Caco-2 (cell line): ENCODE measurements at regions of chr9 and their contacts with region 1.

Region 1: DNA sequence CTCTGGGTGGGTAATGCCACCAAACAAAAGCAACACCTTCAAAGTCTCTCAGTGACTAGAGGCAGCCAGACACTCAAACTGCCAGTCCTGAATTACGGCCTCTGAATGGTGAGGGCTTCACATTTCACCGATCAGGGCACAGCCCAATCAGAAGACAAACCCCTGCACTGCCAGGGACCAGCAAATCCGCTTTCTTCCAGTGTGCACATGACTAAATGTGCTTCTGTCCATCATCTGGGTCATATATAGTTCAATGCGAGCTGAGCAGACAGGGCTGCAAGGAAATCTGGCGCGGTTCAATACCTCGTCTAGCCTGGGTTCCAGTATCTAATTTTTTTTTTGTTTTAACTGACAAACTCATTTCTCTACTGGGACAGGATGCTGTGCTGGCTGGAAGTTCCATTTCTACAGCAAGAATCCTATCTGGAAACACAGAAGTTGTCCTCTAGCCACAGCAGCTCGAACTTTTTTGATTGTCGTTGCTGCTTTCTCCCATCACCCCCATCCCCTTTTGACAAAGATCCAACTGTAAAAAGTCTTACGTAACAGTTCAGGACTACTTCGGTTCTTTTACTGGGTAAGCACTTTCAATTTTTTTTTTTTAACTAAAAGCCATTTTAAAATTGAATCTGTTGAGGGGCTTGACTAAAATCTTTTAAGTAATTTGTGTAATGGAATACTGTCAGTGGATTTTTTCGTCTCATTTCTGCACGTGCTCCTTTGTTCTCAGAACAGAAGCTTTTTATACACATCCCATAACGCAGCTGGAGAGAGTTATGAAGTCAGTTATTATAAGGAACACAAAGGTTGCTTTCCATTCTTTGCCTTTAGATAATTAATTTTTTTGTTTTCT is 112.7 kb downstream of the NR6A1 start:
- DNase-seq: peak; percentile 76 to 85
- H3K4me3 ChIP-seq: peak overlapping the region; percentile 49
- H3K4me3 Mint-ChIP-seq: peak overlapping the region; percentile 98
- H3K27ac Mint-ChIP-seq: peak overlapping the region; percentile 100
- H3K4me1 ChIP-seq: peaks cover 37% of the 10 kb centered on the region
- H3K4me1 Mint-ChIP-seq: peaks cover 7% of the 10 kb centered on the region
- H3K27me3 ChIP-seq: no peaks in the 10 kb centered on the region
- H3K27me3 Mint-ChIP-seq: no peaks in the 10 kb centered on the region
- CTCF ChIP-seq: no peak

Region 2: GRCh38 chr9:124697326-124698200 is 39.2 kb after region 1 on chr9:
- CTCF ChIA-PET with region 1: no interaction called
- POLR2A ChIA-PET with region 1: no interaction called
- intact Hi-C with region 1: loop called (anchors 5 kb)
- DNase-seq: no peak
- H3K4me3 ChIP-seq: no peak overlapping the region
- H3K4me3 Mint-ChIP-seq: no peak overlapping the region
- H3K27ac Mint-ChIP-seq: peak overlapping the region; percentile 5
- H3K4me1 ChIP-seq: peaks cover 47% of the 10 kb centered on the region
- H3K4me1 Mint-ChIP-seq: peaks cover 29% of the 10 kb centered on the region
- H3K27me3 ChIP-seq: no peaks in the 10 kb centered on the region
- H3K27me3 Mint-ChIP-seq: no peaks in the 10 kb centered on the region
- CTCF ChIP-seq: no peak